Kidney (tissue), 22 donors: ENCODE measurements at regions of chr14 and their contacts with region 1.

Region 1: GRCh38 chr14:100108042-100108825 is 43.0 kb downstream of the EVL start:
- DNase-seq: peak; percentile 82 to 90 (median 88)
- H3K4me3 ChIP-seq: no peak overlapping the region
- H3K27ac ChIP-seq: no peak overlapping the region
- H3K4me1 ChIP-seq: peaks cover 0 to 18% (median 5%) of the 10 kb centered on the region in 3 donors
- H3K27me3 ChIP-seq: no peaks in the 10 kb centered on the region
- CTCF ChIP-seq: peak; percentile 72

Region 2: GRCh38 chr14:99715266-99716000 is 392.8 kb before region 1 on chr14:
- intact Hi-C with region 1: no loop called
- DNase-seq: no peak
- H3K4me3 ChIP-seq: no peak overlapping the region
- H3K27ac ChIP-seq: no peak overlapping the region
- H3K4me1 ChIP-seq: no peaks in the 10 kb centered on the region
- H3K27me3 ChIP-seq: no peaks in the 10 kb centered on the region
- CTCF ChIP-seq: no peak

Region 3: DNA sequence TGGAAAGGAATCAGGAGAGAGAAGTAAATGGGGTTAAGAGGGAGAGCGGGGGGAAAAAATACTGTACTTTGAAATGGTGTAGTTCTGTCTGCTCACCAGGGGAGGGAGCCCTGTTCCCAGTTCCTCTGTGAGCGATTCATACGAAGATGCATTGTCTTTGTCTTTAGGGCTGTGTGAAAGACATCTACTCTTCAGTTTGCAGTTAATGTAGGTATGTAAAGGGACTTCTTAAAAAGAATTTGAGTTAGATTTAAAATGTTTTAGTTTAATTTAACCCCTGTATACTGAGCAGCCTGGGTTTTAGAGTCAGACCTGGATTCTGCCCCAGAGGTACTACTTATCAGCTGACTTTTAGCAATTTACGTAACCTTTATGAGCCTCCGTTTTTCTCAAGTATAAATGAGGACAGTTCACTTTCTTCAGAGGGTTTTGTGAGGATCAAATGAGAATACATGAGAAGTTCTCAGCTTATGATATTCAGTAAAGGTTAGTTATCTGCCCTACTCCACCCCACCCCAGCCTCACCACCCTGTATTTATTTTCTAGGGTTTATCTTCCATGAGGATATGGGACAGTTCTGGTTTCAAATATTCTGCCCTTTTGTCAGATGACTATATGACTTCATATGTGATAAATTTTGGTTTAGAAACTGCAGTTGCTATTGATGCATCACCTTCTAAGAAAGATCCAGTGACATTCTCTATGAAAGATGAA is 125.5 kb before region 1 on chr14:
- intact Hi-C with region 1: loop called (anchors 5 kb)
- DNase-seq: peak in 3 of 5 donors; percentile 66 to 80 (median 74)
- H3K4me3 ChIP-seq: no peak overlapping the region
- H3K27ac ChIP-seq: no peak overlapping the region
- H3K4me1 ChIP-seq: no peaks in the 10 kb centered on the region
- H3K27me3 ChIP-seq: no peaks in the 10 kb centered on the region
- CTCF ChIP-seq: peak; percentile 82